HEK293T (cell line): ENCODE measurements at regions of chr12 and their contacts with region 1.

Region 1: GRCh38 chr12:1650260-1650977 is 21.4 kb downstream of the WNT5B start:
- DNase-seq: no peak

Region 2: DNA sequence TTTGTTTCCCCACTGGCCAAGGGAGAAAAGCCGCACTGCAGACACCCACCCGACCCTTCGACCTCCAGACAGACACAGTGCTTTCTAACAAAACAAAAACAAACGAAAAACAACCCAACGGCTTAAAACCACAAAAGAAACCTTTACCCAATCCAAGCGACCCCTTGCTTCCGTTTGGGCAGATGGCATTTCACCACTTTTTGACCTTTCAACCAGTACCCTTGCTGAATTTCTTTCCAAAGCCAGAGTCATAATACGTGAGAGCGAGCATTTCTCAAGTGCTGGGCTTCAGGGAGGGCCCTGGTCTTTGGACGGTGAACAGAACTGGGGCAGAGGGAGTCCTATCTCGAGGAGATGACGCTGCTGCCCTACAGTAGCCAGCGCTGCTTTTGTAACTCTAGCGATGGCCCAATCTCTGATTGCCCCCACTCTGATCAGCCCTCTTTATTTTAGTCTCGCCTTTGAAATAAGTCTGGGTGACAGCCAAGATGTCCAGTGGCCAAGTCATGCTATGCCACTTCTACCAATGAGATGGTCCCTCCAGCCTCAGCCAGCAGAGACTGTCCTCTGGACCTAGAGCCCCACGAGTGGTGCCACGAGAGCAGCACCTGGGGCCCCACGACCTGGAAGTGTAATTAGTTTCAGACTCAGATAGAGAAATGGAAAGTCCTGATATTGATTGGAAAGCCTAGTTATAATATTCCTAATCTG is 18.6 kb after region 1 on chr12:
- CTCF ChIA-PET with region 1: interaction called, 10 read pairs
- POLR2A ChIA-PET with region 1: interaction called, 3 read pairs
- DNase-seq: no peak

Region 3: GRCh38 chr12:1781772-1782171 is 131.4 kb after region 1 on chr12:
- CTCF ChIA-PET with region 1: interaction called, 10 read pairs
- POLR2A ChIA-PET with region 1: no interaction called
- DNase-seq: no peak